ENCODE measurements at regions of chr3 and their contacts with region 1.

Region 1: DNA sequence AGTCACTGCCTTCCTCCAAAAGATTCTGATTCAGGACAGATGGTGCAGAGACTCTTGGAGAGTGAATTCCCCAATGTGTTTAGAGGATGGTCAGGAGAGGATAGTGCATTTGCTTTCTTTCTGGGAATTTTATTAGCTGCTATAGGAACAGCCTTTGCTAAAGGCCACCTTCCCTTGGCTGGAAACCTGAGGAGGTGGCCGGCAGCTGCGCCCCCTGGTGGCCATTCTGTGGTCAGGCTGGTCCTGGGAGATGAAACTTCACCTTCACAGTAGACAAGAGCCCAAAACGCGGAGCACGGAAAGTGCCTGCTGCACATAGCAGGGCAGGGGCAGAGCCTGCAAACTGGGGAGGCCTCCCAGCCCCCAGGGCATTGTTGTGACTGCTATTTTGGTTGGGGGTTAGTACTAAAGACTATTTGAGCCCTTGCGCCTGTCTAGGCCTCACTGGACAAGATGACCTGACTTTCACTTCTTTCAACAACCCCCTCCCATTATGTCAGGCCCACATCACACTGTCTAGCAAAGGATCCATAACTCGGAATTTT is 34.3 kb downstream of the SEC22C start:
- DNase-seq: peak; percentile 46 to 74 (median 51)
- H3K4me3 ChIP-seq: no peak overlapping the region
- H3K4me3 Mint-ChIP-seq: no peak overlapping the region
- H3K27ac ChIP-seq: no peak overlapping the region
- H3K27ac Mint-ChIP-seq: peak overlapping the region in 2 of 8 donors; percentile 8 to 65
- H3K4me1 ChIP-seq: no peaks in the 10 kb centered on the region
- H3K4me1 Mint-ChIP-seq: peaks cover 4 to 20% (median 8%) of the 10 kb centered on the region in 3 donors
- H3K27me3 ChIP-seq: no peaks in the 10 kb centered on the region
- H3K27me3 Mint-ChIP-seq: peaks cover 0 to 1% of the 10 kb centered on the region in 2 donors

Region 2: DNA sequence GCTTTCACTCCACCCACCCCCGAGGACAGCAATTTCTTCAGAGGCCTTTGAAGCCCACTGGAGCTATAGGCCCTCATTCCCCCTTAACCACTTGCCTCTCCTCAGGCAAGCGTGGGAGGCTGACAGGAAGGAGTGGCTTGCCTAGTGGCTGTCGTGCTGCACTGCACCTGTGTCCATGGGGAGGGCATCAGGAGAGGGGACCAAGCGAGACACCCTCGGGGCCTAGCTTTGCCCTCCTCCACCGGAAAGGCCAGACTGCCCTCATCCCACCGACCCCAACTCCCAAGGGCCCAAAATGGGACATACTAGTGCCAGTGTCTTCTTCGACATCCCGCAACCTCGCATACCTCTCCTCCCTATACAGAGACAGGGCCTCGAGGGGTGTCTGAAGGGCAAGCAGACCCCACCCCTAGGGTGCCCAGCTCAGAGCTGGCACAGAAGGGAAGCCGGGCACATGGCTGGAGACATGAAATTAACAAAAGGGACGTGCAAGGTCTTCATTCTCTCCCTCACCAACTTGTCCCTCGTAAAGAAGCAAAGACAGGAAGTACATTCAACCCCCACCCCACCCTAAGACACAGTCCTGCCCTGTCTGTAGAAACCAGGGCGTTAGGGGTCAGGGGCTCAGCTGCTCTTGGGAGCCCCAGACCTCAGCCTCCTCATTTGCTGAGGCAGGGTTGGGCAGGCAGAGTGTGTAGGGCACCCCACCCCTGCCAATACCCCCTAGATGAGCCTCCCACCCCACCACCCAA is 20.7 kb before region 1 on chr3:
- CTCF ChIA-PET with region 1: interaction called, 10 read pairs
- POLR2A ChIA-PET with region 1: no interaction called
- DNase-seq: peak; percentile 10 to 54 (median 30)
- H3K4me3 ChIP-seq: no peak overlapping the region
- H3K4me3 Mint-ChIP-seq: peak overlapping the region in 6 of 7 donors; percentile 23 to 80 (median 61)
- H3K27ac ChIP-seq: no peak overlapping the region
- H3K27ac Mint-ChIP-seq: peak overlapping the region; percentile 85 to 94 (median 90)
- H3K4me1 ChIP-seq: peaks cover 62% of the 10 kb centered on the region
- H3K4me1 Mint-ChIP-seq: peaks cover 52 to 70% (median 68%) of the 10 kb centered on the region in 3 donors
- H3K27me3 ChIP-seq: no peaks in the 10 kb centered on the region
- H3K27me3 Mint-ChIP-seq: no peaks in the 10 kb centered on the region

Measured in CD8-positive, alpha-beta memory T cell (primary cell).